Caco-2 (cell line): ENCODE measurements at regions of chr5 and their contacts with region 1.

Region 1: DNA sequence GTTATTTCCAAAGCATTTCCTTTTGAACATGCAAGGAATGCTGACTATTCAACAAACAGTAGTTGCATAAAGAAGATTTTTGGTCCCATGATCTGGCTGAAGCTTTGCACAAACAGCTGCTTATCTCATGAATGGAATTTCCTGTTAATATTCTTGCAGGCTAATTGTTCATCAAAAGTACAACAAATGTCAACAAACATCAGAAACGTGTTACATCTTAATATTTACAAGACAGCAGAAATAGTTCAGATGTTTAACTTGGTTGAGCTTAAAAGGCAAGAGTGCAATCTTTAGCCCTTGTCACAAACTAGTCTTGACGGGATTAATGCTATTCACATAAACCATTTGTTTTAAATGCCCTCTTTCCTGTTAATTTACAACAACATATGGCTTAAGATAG is 47.9 kb upstream of the BASP1 start:
- DNase-seq: peak; percentile 48 to 70
- H3K4me3 ChIP-seq: no peak overlapping the region
- H3K4me3 Mint-ChIP-seq: no peak overlapping the region
- H3K27ac Mint-ChIP-seq: peak overlapping the region; percentile 24
- H3K4me1 ChIP-seq: peaks cover 26% of the 10 kb centered on the region
- H3K4me1 Mint-ChIP-seq: peaks cover 31% of the 10 kb centered on the region
- H3K27me3 ChIP-seq: no peaks in the 10 kb centered on the region
- H3K27me3 Mint-ChIP-seq: no peaks in the 10 kb centered on the region
- CTCF ChIP-seq: no peak

Region 2: GRCh38 chr5:16721151-16722096 is 448.1 kb before region 1 on chr5:
- CTCF ChIA-PET with region 1: no interaction called
- POLR2A ChIA-PET with region 1: no interaction called
- intact Hi-C with region 1: loop called (anchors 1 kb)
- DNase-seq: peak; percentile 69 to 73
- H3K4me3 ChIP-seq: no peak overlapping the region
- H3K4me3 Mint-ChIP-seq: peak overlapping the region; percentile 37
- H3K27ac Mint-ChIP-seq: peak overlapping the region; percentile 92
- H3K4me1 ChIP-seq: peaks cover 36% of the 10 kb centered on the region
- H3K4me1 Mint-ChIP-seq: peaks cover 20% of the 10 kb centered on the region
- H3K27me3 ChIP-seq: no peaks in the 10 kb centered on the region; the same call in 1 of the 2 replicates
- H3K27me3 Mint-ChIP-seq: no peaks in the 10 kb centered on the region
- CTCF ChIP-seq: no peak

Region 3: GRCh38 chr5:17079562-17079961 is 89.9 kb before region 1 on chr5:
- CTCF ChIA-PET with region 1: no interaction called
- POLR2A ChIA-PET with region 1: no interaction called
- intact Hi-C with region 1: loop called (anchors 1 kb)
- DNase-seq: no peak
- H3K4me3 ChIP-seq: no peak overlapping the region
- H3K4me3 Mint-ChIP-seq: no peak overlapping the region
- H3K27ac Mint-ChIP-seq: no peak overlapping the region
- H3K4me1 ChIP-seq: peaks cover 32% of the 10 kb centered on the region
- H3K4me1 Mint-ChIP-seq: peaks cover 34% of the 10 kb centered on the region
- H3K27me3 ChIP-seq: no peaks in the 10 kb centered on the region
- H3K27me3 Mint-ChIP-seq: no peaks in the 10 kb centered on the region
- CTCF ChIP-seq: no peak

Region 4: GRCh38 chr5:17180957-17181723 is 11.6 kb after region 1 on chr5:
- CTCF ChIA-PET with region 1: no interaction called
- POLR2A ChIA-PET with region 1: no interaction called
- intact Hi-C with region 1: loop called (anchors 1 kb)
- DNase-seq: peak; percentile 75 to 81
- H3K4me3 ChIP-seq: no peak overlapping the region
- H3K4me3 Mint-ChIP-seq: no peak overlapping the region
- H3K27ac Mint-ChIP-seq: peak overlapping the region; percentile 73
- H3K4me1 ChIP-seq: peaks cover 45% of the 10 kb centered on the region
- H3K4me1 Mint-ChIP-seq: peaks cover 41% of the 10 kb centered on the region
- H3K27me3 ChIP-seq: no peaks in the 10 kb centered on the region
- H3K27me3 Mint-ChIP-seq: no peaks in the 10 kb centered on the region
- CTCF ChIP-seq: no peak